GM12878 (cell line): ENCODE measurements at regions of chr1 and their contacts with region 1.

Region 1: GRCh38 chr1:181105134-181106021 is 16.9 kb downstream of the IER5 start:
- DNase-seq: no peak
- ATAC-seq: peak; percentile 82
- H3K4me3 ChIP-seq: peak overlapping the region; percentile 94
- H3K27ac ChIP-seq: peak overlapping the region; percentile 70
- H3K4me1 ChIP-seq: peaks cover 44% of the 10 kb centered on the region
- H3K27me3 ChIP-seq: no peaks in the 10 kb centered on the region
- CTCF ChIP-seq: no peak
- EP300 ChIP-seq: no peak
- POLR2A ChIP-seq: peak; percentile 65
- RAD21 ChIP-seq: no peak

Region 2: GRCh38 chr1:181117638-181118449 is 12.5 kb after region 1 on chr1:
- CTCF ChIA-PET with region 1: interaction called, 1,067 read pairs
- POLR2A ChIA-PET with region 1: interaction called, 24 read pairs
- RAD21 ChIA-PET with region 1: interaction called, 13 read pairs
- SMC1A ChIA-PET with region 1: interaction called, 1,399 read pairs
- in situ Hi-C with region 1: no loop called
- intact Hi-C with region 1: no loop called
- DNase-seq: no peak
- ATAC-seq: no peak
- H3K4me3 ChIP-seq: no peak overlapping the region
- H3K27ac ChIP-seq: no peak overlapping the region
- H3K4me1 ChIP-seq: peaks cover 3% of the 10 kb centered on the region; the same call in 1 of the 2 replicates
- H3K27me3 ChIP-seq: no peaks in the 10 kb centered on the region
- CTCF ChIP-seq: no peak
- EP300 ChIP-seq: no peak
- POLR2A ChIP-seq: no peak
- RAD21 ChIP-seq: no peak